GM13976 (cell line): ENCODE measurements at regions of chr7 and their contacts with region 1.

Region 1: DNA sequence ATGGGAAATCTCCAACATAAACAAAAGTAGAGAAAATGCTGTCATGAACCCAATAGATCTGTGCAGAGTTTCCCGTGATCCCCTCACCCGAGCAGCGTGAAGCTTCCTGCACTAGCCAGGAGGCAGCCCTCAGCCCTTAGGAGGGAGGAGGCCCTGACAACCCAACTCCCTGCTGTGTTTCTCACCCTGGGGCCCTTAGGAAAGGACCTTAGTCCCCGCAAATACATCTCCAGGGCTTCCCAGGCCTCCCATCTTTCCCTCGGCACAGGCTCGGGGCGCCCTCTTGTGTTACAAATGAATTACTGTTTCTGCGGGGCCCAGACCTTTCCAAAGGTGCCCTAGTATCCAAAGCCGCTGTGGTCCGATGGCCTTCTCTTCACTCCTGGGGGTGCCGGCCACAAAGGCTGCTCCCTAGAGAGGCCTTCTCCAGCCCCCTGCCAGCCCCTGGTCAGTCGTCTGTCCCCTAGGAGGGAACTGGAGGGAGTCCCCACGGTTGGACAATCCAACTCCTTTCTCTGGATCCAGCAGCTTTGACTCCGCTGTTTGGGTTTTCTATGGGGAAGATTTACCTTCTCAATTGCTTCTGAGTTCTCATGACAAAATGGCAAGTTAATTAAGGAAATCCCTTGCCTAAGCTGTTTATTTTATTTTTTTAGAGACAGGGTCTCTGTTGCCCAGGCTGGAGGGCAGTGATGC is 49.9 kb upstream of the SH2B2 start:
- DNase-seq: peak; percentile 89
- CTCF ChIP-seq: peak; percentile 69

Region 2: DNA sequence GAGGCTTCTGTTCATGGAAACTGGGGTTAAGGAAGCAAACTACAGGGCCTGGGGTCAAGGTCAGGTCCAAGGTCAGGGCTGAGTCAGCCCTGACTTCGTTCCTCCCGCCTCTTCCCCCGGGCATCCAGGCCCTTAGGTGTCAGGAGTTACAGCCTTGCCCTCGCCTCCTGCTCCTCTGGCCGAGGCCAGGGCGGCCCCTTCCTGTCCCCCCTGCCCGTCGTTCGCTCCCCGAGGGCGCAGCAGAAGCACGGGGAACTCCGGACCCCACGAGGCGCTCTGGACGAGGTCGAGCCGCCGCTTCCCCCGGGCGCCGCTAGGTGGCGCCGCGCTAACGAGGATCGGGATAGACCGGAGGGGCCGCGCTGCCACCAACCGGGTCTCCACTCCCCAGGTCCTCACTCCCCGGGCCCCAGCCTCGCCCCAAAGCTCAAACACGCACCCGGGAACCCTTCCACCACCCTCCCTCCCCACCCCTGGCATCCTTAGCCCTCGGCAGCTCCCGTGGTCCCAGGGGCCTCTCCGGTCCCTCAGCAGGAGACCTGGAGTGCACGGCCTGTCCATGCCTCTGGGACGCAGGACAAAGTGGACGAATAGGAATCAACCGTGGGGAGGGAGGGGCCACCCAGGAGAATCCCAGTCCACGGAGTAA is 548.4 kb before region 1 on chr7:
- in situ Hi-C with region 1: loop called (anchors 5 kb)
- DNase-seq: peak; percentile 94
- CTCF ChIP-seq: peak; percentile 97

Region 3: DNA sequence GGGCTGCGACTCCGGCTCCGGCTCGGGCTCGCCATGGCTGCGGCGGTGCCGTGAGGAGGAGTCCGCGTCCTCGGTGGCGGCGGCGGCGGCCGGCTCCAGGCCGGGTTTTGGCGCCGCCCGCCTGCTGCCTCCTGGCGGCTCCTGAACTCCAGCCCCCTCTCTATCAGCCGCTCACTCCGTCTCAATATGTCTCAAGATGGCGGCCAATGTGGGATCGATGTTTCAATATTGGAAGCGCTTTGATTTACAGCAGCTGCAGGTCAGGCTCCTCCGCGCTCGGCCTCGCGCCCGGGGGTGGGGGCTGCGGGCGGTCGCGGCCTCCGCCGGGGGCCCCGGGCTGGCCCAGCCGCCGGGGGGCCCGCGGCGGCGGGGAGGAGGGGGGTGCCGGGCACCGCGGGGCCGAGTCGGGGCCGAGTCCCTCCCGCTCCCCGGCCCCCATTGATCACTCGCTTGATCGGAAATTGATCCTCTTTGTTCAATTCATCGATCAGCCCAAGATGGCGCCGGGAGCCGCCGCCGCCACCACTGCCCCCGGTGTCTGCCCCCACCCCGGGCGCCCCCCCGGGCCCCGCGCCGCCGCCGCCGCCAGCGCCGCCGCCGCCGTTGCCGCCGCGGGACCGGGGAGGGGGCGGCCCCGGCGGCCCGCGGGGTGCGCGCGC is 420.8 kb before region 1 on chr7:
- in situ Hi-C with region 1: loop called (anchors 10 kb)
- DNase-seq: peak; percentile 88
- CTCF ChIP-seq: peak; percentile 8

Region 4: DNA sequence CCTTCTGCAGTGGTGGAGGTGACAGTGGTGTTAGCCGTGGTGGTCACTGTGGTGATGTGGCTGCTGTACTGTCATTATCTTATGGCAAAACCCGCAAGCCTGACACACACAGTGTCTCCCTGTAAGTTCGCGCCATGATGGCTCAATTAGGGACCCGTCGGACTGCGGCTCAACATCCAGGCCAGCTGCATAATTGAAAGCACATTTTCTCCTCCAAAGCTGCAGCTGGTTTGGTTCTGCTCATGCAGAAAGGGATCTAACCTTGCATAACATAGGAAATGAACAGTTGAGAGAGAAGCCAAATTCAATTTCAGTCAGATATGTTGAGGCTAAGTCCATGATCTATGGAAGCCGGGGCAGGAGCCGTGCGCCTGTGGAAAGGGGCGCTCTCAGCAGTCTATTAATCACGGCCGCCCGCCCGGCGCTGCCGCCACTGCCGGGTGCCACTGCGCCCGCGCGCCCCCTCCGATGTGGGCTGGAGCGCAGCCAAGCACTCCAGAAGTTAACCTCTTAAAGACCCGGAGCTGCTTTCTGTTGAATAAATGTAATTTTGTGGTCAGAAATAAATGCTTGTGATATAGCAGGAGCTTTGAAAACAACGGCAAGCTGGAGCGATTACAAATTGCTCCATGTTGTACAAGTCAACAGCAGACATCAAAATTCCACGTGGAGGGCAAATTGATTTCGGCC is 191.6 kb before region 1 on chr7:
- in situ Hi-C with region 1: no loop called
- DNase-seq: no peak
- CTCF ChIP-seq: no peak

Region 5: DNA sequence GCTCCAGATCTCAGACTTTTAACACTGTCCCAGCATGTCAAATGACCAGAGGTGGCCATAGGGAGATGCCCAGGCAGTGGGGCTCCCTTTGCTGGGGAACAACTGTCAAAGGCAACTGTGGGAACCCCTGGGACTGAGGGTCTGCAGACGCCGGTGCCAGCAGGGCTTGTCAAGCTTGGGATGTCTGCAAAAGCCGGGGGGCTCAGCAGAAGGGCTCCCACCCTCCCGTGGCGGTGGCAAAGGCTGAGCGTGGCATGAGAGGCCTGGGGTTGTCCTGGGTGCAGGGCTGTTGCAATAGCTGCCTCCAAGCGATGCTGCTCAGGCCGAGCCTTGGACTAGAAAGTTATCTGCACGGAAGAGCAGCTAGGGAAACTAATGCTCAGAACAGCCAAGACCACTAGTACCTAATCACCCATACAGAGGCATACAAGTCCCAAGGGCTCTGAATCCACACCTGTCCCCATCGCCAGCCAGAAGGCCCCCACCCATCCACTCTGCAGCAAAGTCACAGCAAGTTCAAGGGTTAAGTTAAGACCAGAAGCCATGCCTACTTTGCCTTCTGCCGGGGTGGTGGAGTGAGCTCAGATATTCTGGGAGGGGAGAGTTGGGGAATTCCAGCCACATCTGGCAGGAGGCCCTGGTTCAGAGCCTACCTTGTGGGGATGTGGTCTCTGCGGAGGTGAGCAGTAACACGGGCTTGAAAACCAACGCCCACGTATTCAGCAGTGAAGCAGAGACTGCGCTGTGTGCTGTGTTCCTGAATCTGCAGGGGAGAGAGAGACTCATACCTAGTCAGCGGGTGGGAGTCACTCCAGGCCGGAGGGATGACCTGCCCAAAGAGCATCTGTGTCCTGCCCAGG is 54.5 kb after region 1 on chr7:
- in situ Hi-C with region 1: no loop called
- DNase-seq: peak; percentile 86
- CTCF ChIP-seq: no peak